ENCODE measurements at regions of chr1 and their contacts with region 1.

Region 1: GRCh38 chr1:41109316-41110197 is 88.0 kb upstream of the SLFNL1 start:
- DNase-seq: peak; percentile 24 to 55
- ATAC-seq: peak; percentile 94 to 95
- H3K4me3 ChIP-seq: peak overlapping the region in 2 of 4 donors; percentile 4 to 9
- H3K27ac ChIP-seq: peak overlapping the region; percentile 76 to 87 (median 82)
- H3K4me1 ChIP-seq: peaks cover 26 to 30% of the 10 kb centered on the region in 2 donors
- H3K27me3 ChIP-seq: no peaks in the 10 kb centered on the region
- CTCF ChIP-seq: no peak
- POLR2A ChIP-seq: peak in 1 of 2 donors; percentile 9

Region 2: GRCh38 chr1:40919475-40920011 is 190.0 kb before region 1 on chr1:
- in situ Hi-C with region 1: no loop called
- intact Hi-C with region 1: no loop called
- DNase-seq: no peak
- ATAC-seq: no peak
- H3K4me3 ChIP-seq: no peak overlapping the region
- H3K27ac ChIP-seq: no peak overlapping the region
- H3K4me1 ChIP-seq: no peaks in the 10 kb centered on the region
- H3K27me3 ChIP-seq: no peaks in the 10 kb centered on the region
- CTCF ChIP-seq: no peak
- POLR2A ChIP-seq: no peak

Region 3: GRCh38 chr1:40939320-40940059 is 170.1 kb before region 1 on chr1:
- in situ Hi-C with region 1: no loop called
- intact Hi-C with region 1: no loop called
- DNase-seq: peak; percentile 8 to 48
- ATAC-seq: peak; percentile 75 to 83
- H3K4me3 ChIP-seq: no peak overlapping the region
- H3K27ac ChIP-seq: peak overlapping the region in 1 of 4 donors; percentile 58
- H3K4me1 ChIP-seq: no peaks in the 10 kb centered on the region
- H3K27me3 ChIP-seq: no peaks in the 10 kb centered on the region
- CTCF ChIP-seq: no peak
- POLR2A ChIP-seq: no peak

Region 4: GRCh38 chr1:41226815-41227434 is 117.4 kb after region 1 on chr1:
- in situ Hi-C with region 1: no loop called
- intact Hi-C with region 1: no loop called
- DNase-seq: no peak
- ATAC-seq: no peak
- H3K4me3 ChIP-seq: no peak overlapping the region
- H3K27ac ChIP-seq: no peak overlapping the region
- H3K4me1 ChIP-seq: peaks cover 7 to 17% of the 10 kb centered on the region in 2 donors
- H3K27me3 ChIP-seq: no peaks in the 10 kb centered on the region
- CTCF ChIP-seq: no peak
- POLR2A ChIP-seq: no peak

Region 5: DNA sequence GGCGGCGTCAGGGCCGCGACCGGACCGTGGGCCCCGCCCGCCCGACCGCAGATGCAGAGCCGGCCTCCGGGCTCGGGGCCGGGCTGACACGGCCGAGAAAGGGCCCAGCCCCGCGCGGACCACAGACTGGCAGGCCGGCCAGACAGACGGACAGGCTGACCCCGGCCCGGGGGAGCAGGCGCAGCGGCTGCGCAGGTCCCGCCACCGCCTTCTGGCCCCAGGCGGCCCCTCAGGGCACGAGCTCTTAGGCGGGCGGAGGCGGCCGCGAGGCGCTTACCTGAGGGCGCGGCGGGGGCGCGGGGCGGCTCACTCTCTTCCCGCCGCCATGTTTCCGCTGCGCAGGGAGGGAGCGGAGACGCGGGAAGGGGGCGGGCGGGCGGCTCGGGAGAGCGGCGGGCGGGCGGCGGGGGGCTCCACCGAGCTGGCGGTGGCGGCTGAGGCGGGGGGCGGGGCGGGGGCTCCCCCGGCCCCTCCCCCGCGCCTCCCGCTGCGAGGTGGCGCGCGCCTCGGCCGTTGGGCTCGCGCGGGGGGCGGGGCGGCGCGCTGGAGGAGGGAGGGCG is 132.3 kb after region 1 on chr1 and contains the start of gene SCMH1:
- in situ Hi-C with region 1: no loop called
- intact Hi-C with region 1: loop called (anchors 2 kb)
- DNase-seq: peak; percentile 4 to 25
- ATAC-seq: peak; percentile 69 to 70
- H3K4me3 ChIP-seq: peak within 1 kb of the TSS; percentile 67 to 93 (median 82)
- H3K27ac ChIP-seq: peak within 1 kb of the TSS; percentile 81 to 98 (median 92)
- H3K4me1 ChIP-seq: peaks cover 7 to 22% of the 10 kb centered on the region in 2 donors
- H3K27me3 ChIP-seq: no peaks in the 10 kb centered on the region
- CTCF ChIP-seq: no peak
- POLR2A ChIP-seq: no peak
- total RNA-seq, gene SCMH1: 17.1 to 29.4 (median 25.5) TPM

Region 6: GRCh38 chr1:41423511-41424221 is 314.1 kb after region 1 on chr1:
- in situ Hi-C with region 1: no loop called
- intact Hi-C with region 1: loop called (anchors 10 kb)
- DNase-seq: peak; percentile 87 to 96
- ATAC-seq: peak; percentile 58 to 65
- H3K4me3 ChIP-seq: peak overlapping the region; percentile 28 to 56 (median 35)
- H3K27ac ChIP-seq: peak overlapping the region; percentile 88 to 95 (median 88)
- H3K4me1 ChIP-seq: peaks cover 38 to 39% of the 10 kb centered on the region in 2 donors
- H3K27me3 ChIP-seq: no peaks in the 10 kb centered on the region
- CTCF ChIP-seq: peak; percentile 50 to 65 (median 62)
- POLR2A ChIP-seq: no peak